ENCODE measurements at regions of chr14 and their contacts with region 1.

Region 1: GRCh38 chr14:34875031-34875922 is at the start of gene BAZ1A:
- DNase-seq: peak; percentile 24 to 64 (median 52)
- H3K4me3 ChIP-seq: peak within 1 kb of the TSS; percentile 86
- H3K4me3 Mint-ChIP-seq: peak within 1 kb of the TSS; percentile 97 to 100 (median 100)
- H3K27ac ChIP-seq: peak within 1 kb of the TSS; percentile 98
- H3K27ac Mint-ChIP-seq: peak within 1 kb of the TSS; percentile 97 to 100 (median 99)
- H3K4me1 ChIP-seq: peaks cover 15% of the 10 kb centered on the region
- H3K4me1 Mint-ChIP-seq: peaks cover 27 to 44% (median 44%) of the 10 kb centered on the region in 3 donors
- H3K27me3 ChIP-seq: no peaks in the 10 kb centered on the region
- H3K27me3 Mint-ChIP-seq: no peaks in the 10 kb centered on the region
- total RNA-seq, gene BAZ1A: 67.5 to 70.5 TPM

Region 2: GRCh38 chr14:34931206-34931605 is 55.9 kb after region 1 on chr14:
- CTCF ChIA-PET with region 1: interaction called, 3 read pairs
- POLR2A ChIA-PET with region 1: interaction called, 39 read pairs
- DNase-seq: peak in 4 of 5 donors; percentile 6 to 78 (median 73)
- H3K4me3 ChIP-seq: peak overlapping the region; percentile 39
- H3K4me3 Mint-ChIP-seq: peak overlapping the region; percentile 16 to 80 (median 58)
- H3K27ac ChIP-seq: peak overlapping the region; percentile 71
- H3K27ac Mint-ChIP-seq: peak overlapping the region; percentile 88 to 99 (median 97)
- H3K4me1 ChIP-seq: peaks cover 31% of the 10 kb centered on the region
- H3K4me1 Mint-ChIP-seq: peaks cover 24 to 37% (median 37%) of the 10 kb centered on the region in 3 donors
- H3K27me3 ChIP-seq: no peaks in the 10 kb centered on the region
- H3K27me3 Mint-ChIP-seq: peaks cover 0 to 1% of the 10 kb centered on the region in 2 donors

Region 3: GRCh38 chr14:35034440-35034833 is 159.2 kb after region 1 on chr14:
- CTCF ChIA-PET with region 1: no interaction called
- POLR2A ChIA-PET with region 1: no interaction called
- DNase-seq: no peak
- H3K4me3 ChIP-seq: no peak overlapping the region
- H3K4me3 Mint-ChIP-seq: peak overlapping the region in 1 of 7 donors; percentile 40
- H3K27ac ChIP-seq: no peak overlapping the region
- H3K27ac Mint-ChIP-seq: no peak overlapping the region
- H3K4me1 ChIP-seq: no peaks in the 10 kb centered on the region
- H3K4me1 Mint-ChIP-seq: no peaks in the 10 kb centered on the region
- H3K27me3 ChIP-seq: no peaks in the 10 kb centered on the region
- H3K27me3 Mint-ChIP-seq: no peaks in the 10 kb centered on the region

Region 4: DNA sequence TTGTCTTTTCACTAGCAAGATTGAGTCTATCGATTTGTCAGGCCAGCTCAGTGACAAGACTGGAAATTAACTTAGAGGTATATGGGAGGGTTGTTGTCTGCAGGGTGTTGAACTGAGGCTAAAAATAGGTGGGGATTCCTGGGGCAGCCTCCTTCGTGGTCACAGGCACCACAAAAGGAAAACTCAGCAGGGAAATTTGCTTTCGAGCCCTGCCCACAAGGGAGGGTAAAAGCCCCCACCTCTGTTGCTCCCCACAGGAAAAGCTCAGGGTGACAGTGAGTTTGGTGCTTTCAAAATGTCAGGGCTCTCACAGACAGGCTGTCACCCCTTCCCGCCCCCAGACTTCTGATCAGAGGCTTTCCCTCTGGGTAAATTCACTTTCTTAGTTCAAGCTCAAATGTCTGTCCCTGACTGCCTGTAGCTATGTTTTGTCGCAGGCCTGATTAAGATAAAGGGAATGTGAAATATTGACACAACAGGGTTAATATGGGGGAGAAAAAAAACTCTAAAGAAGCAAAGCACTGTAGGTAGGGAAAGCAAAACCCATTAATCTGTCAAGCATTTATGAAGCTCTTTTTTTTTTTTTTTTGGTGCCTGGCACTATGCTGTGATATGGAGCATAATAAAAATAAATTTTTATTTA is 541.0 kb after region 1 on chr14:
- CTCF ChIA-PET with region 1: no interaction called
- POLR2A ChIA-PET with region 1: interaction called, 12 read pairs
- DNase-seq: peak; percentile 55 to 79 (median 68)
- H3K4me3 ChIP-seq: peak overlapping the region; percentile 32
- H3K4me3 Mint-ChIP-seq: peak overlapping the region; percentile 41 to 86 (median 80)
- H3K27ac ChIP-seq: no peak overlapping the region
- H3K27ac Mint-ChIP-seq: peak overlapping the region; percentile 86 to 99 (median 96)
- H3K4me1 ChIP-seq: peaks cover 34% of the 10 kb centered on the region
- H3K4me1 Mint-ChIP-seq: peaks cover 49 to 61% (median 58%) of the 10 kb centered on the region in 3 donors
- H3K27me3 ChIP-seq: no peaks in the 10 kb centered on the region
- H3K27me3 Mint-ChIP-seq: peaks cover 0 to 4% of the 10 kb centered on the region in 2 donors

Measured in CD8-positive, alpha-beta memory T cell (primary cell).